PC-3 (cell line): ENCODE measurements at regions of chr1 and their contacts with region 1.

Region 1: GRCh38 chr1:7667625-7668218 is 103.4 kb upstream of the VAMP3 start:
- DNase-seq: peak; percentile 88
- ATAC-seq: peak; percentile 88
- H3K4me3 ChIP-seq: no peak overlapping the region
- H3K27ac ChIP-seq: no peak overlapping the region
- H3K4me1 ChIP-seq: no peaks in the 10 kb centered on the region
- H3K27me3 ChIP-seq: no peaks in the 10 kb centered on the region
- CTCF ChIP-seq: peak; percentile 97

Region 2: GRCh38 chr1:7454052-7454815 is 213.5 kb before region 1 on chr1:
- CTCF ChIA-PET with region 1: no interaction called
- POLR2A ChIA-PET with region 1: no interaction called
- intact Hi-C with region 1: no loop called
- DNase-seq: peak; percentile 18
- ATAC-seq: peak; percentile 53
- H3K4me3 ChIP-seq: no peak overlapping the region
- H3K27ac ChIP-seq: no peak overlapping the region
- H3K4me1 ChIP-seq: no peaks in the 10 kb centered on the region
- H3K27me3 ChIP-seq: peaks cover 12% of the 10 kb centered on the region
- CTCF ChIP-seq: peak; percentile 60

Region 3: DNA sequence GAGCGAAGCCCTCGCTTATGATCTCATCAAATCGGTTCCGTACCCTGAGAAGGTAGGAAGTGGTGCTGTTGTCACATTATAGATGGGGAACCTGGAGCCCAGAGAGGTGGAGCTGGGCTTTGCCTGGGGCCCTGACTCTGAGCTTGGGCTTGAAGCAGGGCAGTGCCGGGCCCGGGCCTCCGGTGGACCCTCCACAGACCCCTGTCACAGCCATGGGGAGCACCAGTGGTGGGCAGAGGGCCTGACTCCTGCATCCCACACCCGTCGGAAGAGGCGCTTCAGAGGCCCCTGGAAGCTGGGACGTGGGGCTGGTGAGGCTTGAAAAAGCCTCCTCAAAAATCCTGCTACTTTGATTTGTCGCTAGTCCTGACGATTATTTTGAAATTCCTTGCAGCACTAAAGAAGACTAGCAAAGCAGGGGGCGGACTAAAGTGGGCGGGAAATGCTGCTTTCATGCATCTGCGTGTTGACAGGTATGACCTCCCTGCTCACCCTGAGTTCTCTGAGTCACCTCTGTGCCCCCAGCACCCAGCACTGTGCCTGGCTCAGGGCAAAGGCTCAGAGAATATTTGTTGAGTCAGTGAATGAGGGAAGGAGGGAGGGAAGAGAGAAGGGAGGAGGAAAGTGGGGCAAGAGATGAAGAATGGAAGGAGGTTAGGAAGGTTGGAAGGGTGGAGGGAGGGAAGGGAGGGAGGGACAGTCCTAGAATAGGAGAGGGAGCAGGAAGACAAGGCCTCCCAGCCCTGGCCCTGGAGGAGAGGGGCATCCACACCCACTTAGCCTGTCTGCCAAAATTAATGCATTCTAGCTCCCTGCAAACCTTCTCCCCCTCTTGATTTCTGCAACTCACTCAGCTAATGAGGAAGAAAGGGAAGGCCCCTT is 159.4 kb before region 1 on chr1:
- CTCF ChIA-PET with region 1: no interaction called
- POLR2A ChIA-PET with region 1: no interaction called
- intact Hi-C with region 1: no loop called
- DNase-seq: no peak
- ATAC-seq: no peak
- H3K4me3 ChIP-seq: no peak overlapping the region
- H3K27ac ChIP-seq: no peak overlapping the region
- H3K4me1 ChIP-seq: no peaks in the 10 kb centered on the region
- H3K27me3 ChIP-seq: peaks cover 45% of the 10 kb centered on the region
- CTCF ChIP-seq: no peak

Region 4: DNA sequence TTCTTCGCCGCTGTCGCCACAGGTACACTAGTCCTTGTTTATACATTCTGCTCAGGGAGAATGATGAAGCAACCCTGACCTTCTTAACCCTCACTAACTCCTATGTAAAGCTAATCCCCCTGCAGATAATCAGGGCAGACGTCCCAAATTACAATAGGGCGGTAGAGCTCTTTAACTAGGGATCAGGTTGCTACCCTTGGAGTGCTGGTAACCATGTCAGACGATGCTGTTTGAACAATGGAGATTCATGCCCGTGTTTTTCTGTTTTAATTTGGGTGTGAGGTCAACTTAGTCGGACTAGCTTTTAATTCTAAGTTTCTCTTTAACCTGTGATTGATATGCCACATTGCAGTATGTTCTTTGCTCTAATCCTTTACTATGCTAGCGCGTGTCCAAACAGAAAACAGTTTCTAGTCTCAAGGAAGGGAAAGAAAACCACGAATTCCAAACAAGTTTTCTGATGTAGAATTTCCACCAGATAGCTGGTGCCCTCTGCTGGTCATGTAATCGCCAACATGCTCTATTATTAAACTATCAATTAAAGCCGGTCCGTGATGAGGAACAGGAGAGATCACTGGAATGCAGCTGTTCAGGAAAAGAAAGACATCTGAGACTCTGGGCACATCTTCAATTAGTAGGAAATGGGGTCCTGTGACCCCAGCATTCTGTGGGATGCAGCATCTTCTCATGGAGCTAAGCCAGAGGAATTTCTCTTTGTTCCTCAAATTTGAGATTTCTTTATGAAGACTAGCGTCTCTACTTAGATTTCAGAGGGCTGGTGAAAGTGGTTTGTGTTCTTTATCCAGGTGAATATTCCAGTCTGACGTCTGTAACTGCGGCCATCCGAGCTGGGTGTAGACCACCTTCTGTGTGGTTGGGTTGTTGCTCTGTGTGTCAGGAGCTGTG is 85.0 kb after region 1 on chr1:
- CTCF ChIA-PET with region 1: interaction called, 92 read pairs
- POLR2A ChIA-PET with region 1: no interaction called
- intact Hi-C with region 1: loop called (anchors 1 kb)
- DNase-seq: peak; percentile 78
- ATAC-seq: peak; percentile 83
- H3K4me3 ChIP-seq: peak overlapping the region; percentile 69
- H3K27ac ChIP-seq: no peak overlapping the region
- H3K4me1 ChIP-seq: no peaks in the 10 kb centered on the region; the same call in 1 of the 2 replicates
- H3K27me3 ChIP-seq: peaks cover 12% of the 10 kb centered on the region; the same call in 1 of the 2 replicates
- CTCF ChIP-seq: peak; percentile 90

Region 5: GRCh38 chr1:7902478-7903085 is 234.9 kb after region 1 on chr1:
- CTCF ChIA-PET with region 1: no interaction called
- POLR2A ChIA-PET with region 1: no interaction called
- intact Hi-C with region 1: loop called (anchors 5 kb)
- DNase-seq: peak; percentile 81
- ATAC-seq: peak; percentile 85
- H3K4me3 ChIP-seq: peak overlapping the region; percentile 9; the same call in 1 of the 2 replicates
- H3K27ac ChIP-seq: no peak overlapping the region
- H3K4me1 ChIP-seq: peaks cover 18% of the 10 kb centered on the region
- H3K27me3 ChIP-seq: no peaks in the 10 kb centered on the region
- CTCF ChIP-seq: peak; percentile 73

Region 6: GRCh38 chr1:7922301-7922700 is 254.6 kb after region 1 on chr1:
- CTCF ChIA-PET with region 1: no interaction called
- POLR2A ChIA-PET with region 1: no interaction called
- intact Hi-C with region 1: no loop called
- DNase-seq: no peak
- ATAC-seq: no peak
- H3K4me3 ChIP-seq: no peak overlapping the region
- H3K27ac ChIP-seq: no peak overlapping the region
- H3K4me1 ChIP-seq: no peaks in the 10 kb centered on the region
- H3K27me3 ChIP-seq: no peaks in the 10 kb centered on the region
- CTCF ChIP-seq: no peak

Region 7: DNA sequence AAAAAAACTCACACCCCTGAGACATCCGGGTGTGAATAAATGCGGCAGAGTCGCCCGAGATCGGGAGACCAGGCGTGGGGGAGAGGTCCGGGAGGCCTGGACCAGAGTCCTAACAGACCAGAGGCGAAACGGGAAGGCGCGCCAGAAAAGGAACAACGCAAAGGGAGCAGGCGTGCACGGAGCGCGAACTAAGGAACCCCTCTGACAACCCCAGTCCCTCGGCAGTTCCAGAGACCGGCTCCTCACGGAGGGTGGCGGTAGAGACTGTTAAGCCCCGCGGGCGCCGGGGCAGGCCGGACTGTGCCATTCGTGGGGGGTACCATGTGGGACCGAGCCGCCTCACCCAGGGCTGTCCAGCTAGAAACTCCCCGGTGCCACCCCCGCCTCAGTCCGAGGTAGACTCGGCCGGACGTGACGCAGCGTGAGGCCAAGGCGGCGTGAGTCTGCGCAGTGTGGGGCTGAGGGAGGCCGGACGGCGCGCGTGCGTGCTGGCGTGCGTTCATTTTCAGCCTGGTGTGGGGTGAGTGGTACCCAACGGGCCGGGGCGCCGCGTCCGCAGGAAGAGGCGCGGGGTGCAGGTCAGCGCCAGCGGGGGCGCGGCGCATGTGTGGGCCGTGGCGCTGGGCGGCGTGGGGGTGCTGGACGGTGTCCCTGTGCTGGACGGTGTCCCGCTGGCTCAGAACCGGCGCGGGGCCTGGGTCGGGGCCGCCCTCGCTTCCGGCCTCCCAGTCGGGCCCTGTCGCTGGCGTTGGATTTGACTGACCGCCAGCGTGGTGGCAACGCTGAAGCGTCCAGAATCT is 293.7 kb after region 1 on chr1 and contains the start of gene PARK7:
- CTCF ChIA-PET with region 1: no interaction called
- POLR2A ChIA-PET with region 1: no interaction called
- intact Hi-C with region 1: loop called (anchors 10 kb)
- DNase-seq: peak; percentile 99
- ATAC-seq: peak; percentile 96
- H3K4me3 ChIP-seq: peak within 1 kb of the TSS; percentile 91
- H3K27ac ChIP-seq: peak within 1 kb of the TSS; percentile 67
- H3K4me1 ChIP-seq: peaks cover 13% of the 10 kb centered on the region
- H3K27me3 ChIP-seq: no peaks in the 10 kb centered on the region
- CTCF ChIP-seq: peak; percentile 46
- total RNA-seq, gene PARK7: 316 and 333 TPM in 2 replicates